WTC11 (cell line): ENCODE measurements at regions of chr7 and their contacts with region 1.

Region 1: DNA sequence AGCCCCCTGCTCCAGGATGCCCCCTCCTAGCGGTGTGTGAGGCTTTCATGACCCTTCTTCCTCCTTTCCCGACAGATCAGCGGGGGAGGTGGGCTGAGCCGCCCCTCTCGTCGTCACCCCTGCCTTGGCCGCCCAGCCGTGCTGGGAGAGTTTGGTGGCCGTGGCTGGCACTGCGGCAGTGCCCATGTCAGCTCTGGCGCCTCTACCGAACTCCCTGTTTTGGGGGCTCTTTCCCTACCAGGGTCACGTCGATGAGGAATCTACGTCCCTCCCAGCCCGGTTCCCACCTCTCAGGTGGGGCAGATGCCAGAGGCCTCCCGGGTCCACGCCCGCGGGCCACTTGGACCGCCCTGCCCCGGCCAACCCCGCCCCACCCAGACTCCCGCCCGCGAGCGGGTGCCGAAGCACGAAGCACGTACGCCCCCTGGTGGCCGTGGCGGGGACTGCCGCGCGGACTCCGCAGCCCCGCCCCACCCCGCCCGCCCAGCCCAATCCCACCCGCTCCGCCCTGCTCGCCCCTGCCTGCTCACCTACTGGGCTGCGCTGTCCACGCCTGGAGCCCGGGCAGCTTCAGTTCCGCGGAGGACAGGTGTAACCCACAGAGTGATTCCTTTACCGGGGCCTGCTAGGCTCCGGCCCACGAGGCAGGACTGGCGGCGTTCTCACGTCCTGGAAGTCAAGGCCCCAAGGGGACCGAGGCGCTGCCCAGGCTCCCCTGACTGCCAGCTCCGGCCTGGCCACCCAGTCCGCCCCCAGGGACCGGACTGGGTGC is 127.1 kb downstream of the UBE2H start:
- DNase-seq: peak; percentile 91
- ATAC-seq: peak; percentile 26
- H3K4me3 Mint-ChIP-seq: peak overlapping the region; percentile 85
- H3K27ac Mint-ChIP-seq: no peak overlapping the region
- H3K4me1 Mint-ChIP-seq: peaks cover 35% of the 10 kb centered on the region
- H3K27me3 Mint-ChIP-seq: no peaks in the 10 kb centered on the region; the same call in 1 of the 2 replicates
- CTCF ChIP-seq: peak; percentile 99

Region 2: GRCh38 chr7:129433847-129434674 is 391.6 kb before region 1 on chr7 and contains the start of gene STRIP2:
- CTCF ChIA-PET with region 1: interaction called, 13 read pairs
- POLR2A ChIA-PET with region 1: no interaction called
- DNase-seq: peak; percentile 99
- ATAC-seq: peak; percentile 88
- H3K4me3 Mint-ChIP-seq: peak within 1 kb of the TSS; percentile 86
- H3K27ac Mint-ChIP-seq: peak within 1 kb of the TSS; percentile 94
- H3K4me1 Mint-ChIP-seq: peaks cover 23% of the 10 kb centered on the region
- H3K27me3 Mint-ChIP-seq: peaks cover 31% of the 10 kb centered on the region
- CTCF ChIP-seq: no peak
- total RNA-seq, gene STRIP2: 6.5 to 7.7 TPM (median 7.6 TPM) in 3 replicates

Region 3: GRCh38 chr7:129617652-129618051 is 208.0 kb before region 1 on chr7:
- CTCF ChIA-PET with region 1: interaction called, 35 read pairs
- POLR2A ChIA-PET with region 1: no interaction called
- DNase-seq: no peak
- ATAC-seq: no peak
- H3K4me3 Mint-ChIP-seq: no peak overlapping the region
- H3K27ac Mint-ChIP-seq: peak overlapping the region; percentile 30; the same call in 1 of the 2 replicates
- H3K4me1 Mint-ChIP-seq: peaks cover 49% of the 10 kb centered on the region
- H3K27me3 Mint-ChIP-seq: no peaks in the 10 kb centered on the region
- CTCF ChIP-seq: no peak

Region 4: GRCh38 chr7:129734400-129734799 is 91.3 kb before region 1 on chr7:
- CTCF ChIA-PET with region 1: interaction called, 26 read pairs
- POLR2A ChIA-PET with region 1: interaction called, 7 read pairs
- DNase-seq: no peak
- ATAC-seq: no peak
- H3K4me3 Mint-ChIP-seq: no peak overlapping the region
- H3K27ac Mint-ChIP-seq: peak overlapping the region; percentile 54
- H3K4me1 Mint-ChIP-seq: peaks cover 15% of the 10 kb centered on the region
- H3K27me3 Mint-ChIP-seq: no peaks in the 10 kb centered on the region
- CTCF ChIP-seq: no peak

Region 5: GRCh38 chr7:129774359-129774758 is 51.3 kb before region 1 on chr7:
- CTCF ChIA-PET with region 1: interaction called, 61 read pairs
- POLR2A ChIA-PET with region 1: interaction called, 8 read pairs
- DNase-seq: peak; percentile 48
- ATAC-seq: peak; percentile 5; the same call in 1 of the 2 replicates
- H3K4me3 Mint-ChIP-seq: peak overlapping the region; percentile 31
- H3K27ac Mint-ChIP-seq: no peak overlapping the region
- H3K4me1 Mint-ChIP-seq: peaks cover 79% of the 10 kb centered on the region
- H3K27me3 Mint-ChIP-seq: peaks cover 50% of the 10 kb centered on the region
- CTCF ChIP-seq: no peak

Region 6: DNA sequence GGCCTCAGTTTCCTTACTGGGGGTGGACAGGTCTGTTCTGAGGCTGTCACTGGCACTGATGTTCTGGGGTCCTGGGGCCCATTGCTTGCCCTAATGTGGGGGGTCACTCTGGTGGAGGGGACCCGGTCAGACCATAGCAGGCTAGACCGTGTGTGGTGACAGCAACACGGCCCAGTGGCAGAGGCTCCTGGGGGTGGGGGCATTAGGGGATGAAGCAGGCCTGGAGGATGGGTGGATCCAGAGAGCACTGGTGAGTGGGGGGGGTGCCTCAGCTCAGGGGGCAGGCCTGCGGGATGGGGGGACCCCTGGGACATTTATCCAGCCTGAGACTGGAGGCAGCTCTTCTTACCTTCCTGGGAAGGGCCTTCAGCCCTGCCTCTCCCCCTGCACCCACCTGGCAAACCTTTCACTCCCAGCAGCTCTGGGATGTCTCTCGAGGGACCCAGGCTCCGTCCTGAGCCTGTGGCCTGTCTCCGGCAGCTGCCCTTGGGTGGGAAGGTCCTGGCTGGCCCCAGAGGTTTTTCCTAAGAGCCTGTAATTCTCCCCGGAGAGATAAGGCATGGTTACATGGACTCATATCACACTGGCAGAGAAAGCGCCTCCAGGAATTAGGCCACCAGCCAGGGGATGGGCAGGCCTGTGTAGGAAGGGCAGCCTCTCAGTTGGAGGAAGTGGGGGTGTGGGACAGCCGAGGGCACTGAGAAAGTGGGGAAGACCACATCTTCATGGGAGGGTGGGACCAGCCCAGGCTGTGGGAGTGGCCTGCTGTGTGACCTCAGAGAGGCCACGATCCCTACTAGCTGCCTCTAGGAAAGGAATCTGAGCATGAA is 20.6 kb before region 1 on chr7:
- CTCF ChIA-PET with region 1: interaction called, 15 read pairs
- POLR2A ChIA-PET with region 1: no interaction called
- DNase-seq: no peak
- ATAC-seq: peak; percentile 20; the same call in 1 of the 2 replicates
- H3K4me3 Mint-ChIP-seq: no peak overlapping the region
- H3K27ac Mint-ChIP-seq: no peak overlapping the region
- H3K4me1 Mint-ChIP-seq: peaks cover 38% of the 10 kb centered on the region
- H3K27me3 Mint-ChIP-seq: peaks cover 2% of the 10 kb centered on the region; the same call in 1 of the 2 replicates
- CTCF ChIP-seq: no peak

Region 7: GRCh38 chr7:129896568-129897382 is 71.1 kb after region 1 on chr7:
- CTCF ChIA-PET with region 1: no interaction called
- POLR2A ChIA-PET with region 1: no interaction called
- DNase-seq: no peak
- ATAC-seq: no peak
- H3K4me3 Mint-ChIP-seq: no peak overlapping the region
- H3K27ac Mint-ChIP-seq: no peak overlapping the region; the same call in 1 of the 2 replicates
- H3K4me1 Mint-ChIP-seq: peaks cover 19% of the 10 kb centered on the region
- H3K27me3 Mint-ChIP-seq: no peaks in the 10 kb centered on the region
- CTCF ChIP-seq: no peak

Region 8: GRCh38 chr7:130010689-130011412 is 185.2 kb after region 1 on chr7:
- CTCF ChIA-PET with region 1: interaction called, 59 read pairs
- POLR2A ChIA-PET with region 1: interaction called, 6 read pairs
- DNase-seq: peak; percentile 93
- ATAC-seq: peak; percentile 78
- H3K4me3 Mint-ChIP-seq: no peak overlapping the region
- H3K27ac Mint-ChIP-seq: 0 out of 2 replicates have a peak overlapping the region, but pooled peaks have one; percentile 44
- H3K4me1 Mint-ChIP-seq: peaks cover 3% of the 10 kb centered on the region
- H3K27me3 Mint-ChIP-seq: no peaks in the 10 kb centered on the region
- CTCF ChIP-seq: peak; percentile 95